Activated T-helper 1 cell treated with anti-CD3 and anti-CD28 coated beads, Interleukin-12 subunit alpha, Interleukin-12 subunit beta, Interleukin-2, Interleukin-4 antibody, amounts not matched to agents 30 ng/mL and 10 ng/mL and 1 ng/mL, durations not matched to agents 14 hours and 24 hours and 36 hours (primary cell): ENCODE measurements at regions of chrX and their contacts with region 1.

Region 1: DNA sequence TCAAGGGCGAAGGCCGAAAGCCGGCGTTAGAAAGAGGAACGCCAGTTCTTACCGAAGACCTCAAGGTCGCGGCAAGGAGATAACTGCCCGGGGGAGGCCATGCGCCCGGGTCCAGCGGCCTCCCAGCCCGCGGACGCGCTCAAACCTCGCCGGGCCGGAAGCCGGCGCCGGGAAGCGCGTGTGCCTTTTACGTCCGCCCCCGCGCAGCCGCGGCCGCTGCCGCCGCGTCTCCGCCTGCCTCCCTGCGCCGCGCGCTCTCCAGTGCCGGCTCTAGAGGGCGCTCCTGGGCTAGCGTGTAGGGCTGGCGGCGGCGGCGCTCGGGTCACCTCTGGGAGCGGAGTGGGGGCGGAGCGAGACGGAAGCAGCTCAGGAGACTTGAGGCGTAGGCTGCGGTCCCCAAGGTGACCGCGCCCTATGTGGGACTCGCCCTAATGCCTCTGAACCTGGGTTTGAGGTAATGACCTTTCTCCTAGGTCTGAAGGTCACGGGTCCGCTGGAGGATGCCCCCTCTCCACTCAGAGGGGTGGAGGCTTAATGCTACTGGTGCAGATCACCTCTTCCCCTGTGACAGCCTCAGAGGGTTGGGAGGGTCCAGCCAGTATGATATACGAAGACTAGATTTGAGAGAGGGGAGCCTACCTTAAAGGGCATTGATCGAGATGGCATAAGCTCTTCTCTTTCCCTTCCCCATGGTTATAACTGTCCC is 839 bp downstream of the SLC25A5 start:
- DNase-seq: peak; percentile 83
- H3K4me3 Mint-ChIP-seq: peak overlapping the region; percentile 90
- H3K27ac Mint-ChIP-seq: peak overlapping the region; percentile 93
- H3K4me1 Mint-ChIP-seq: peaks cover 12% of the 10 kb centered on the region
- H3K27me3 Mint-ChIP-seq: no peaks in the 10 kb centered on the region

Region 2: DNA sequence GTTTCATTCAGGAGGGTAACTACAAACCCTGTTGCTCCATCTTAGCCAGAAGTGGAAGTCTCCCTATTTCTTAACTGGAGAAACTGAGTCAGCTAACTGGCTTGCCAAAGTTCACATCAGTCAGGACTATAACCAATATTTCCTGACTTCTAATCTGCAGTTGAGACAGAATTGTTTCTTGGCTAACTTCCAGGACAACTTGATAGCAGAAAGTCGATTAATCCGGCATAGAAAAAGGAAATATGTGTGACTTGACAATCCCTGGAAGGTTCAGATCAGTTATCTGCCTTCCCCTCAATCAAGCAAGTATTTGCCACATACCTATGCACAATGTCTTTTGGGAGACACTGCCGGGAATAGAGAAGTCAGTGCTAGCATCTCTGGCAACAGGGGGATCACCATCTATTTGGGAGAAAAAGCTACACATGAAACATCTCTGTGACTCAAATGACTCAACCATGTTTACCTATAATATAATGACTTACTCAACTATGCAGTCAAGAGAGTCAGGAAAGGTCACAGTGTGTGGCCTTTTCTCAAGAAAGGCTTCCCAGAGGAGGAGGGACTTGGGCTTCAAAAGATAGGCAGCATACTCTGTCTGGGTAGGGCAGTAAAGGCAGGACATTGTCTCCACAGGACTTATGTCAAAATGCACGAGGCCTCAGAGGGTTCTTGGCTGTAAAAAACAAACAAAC is 507.1 kb before region 1 on chrX:
- intact Hi-C with region 1: no loop called
- DNase-seq: no peak
- H3K4me3 Mint-ChIP-seq: no peak overlapping the region
- H3K27ac Mint-ChIP-seq: no peak overlapping the region
- H3K4me1 Mint-ChIP-seq: no peaks in the 10 kb centered on the region
- H3K27me3 Mint-ChIP-seq: peaks cover 4% of the 10 kb centered on the region

Region 3: GRCh38 chrX:119398974-119399771 is 69.9 kb before region 1 on chrX and contains the start of gene SLC25A43:
- intact Hi-C with region 1: loop called (anchors 1 kb)
- DNase-seq: peak; percentile 14
- H3K4me3 Mint-ChIP-seq: peak within 1 kb of the TSS; percentile 89
- H3K27ac Mint-ChIP-seq: peak within 1 kb of the TSS; percentile 88
- H3K4me1 Mint-ChIP-seq: peaks cover 28% of the 10 kb centered on the region
- H3K27me3 Mint-ChIP-seq: peaks cover 2% of the 10 kb centered on the region
- total RNA-seq, gene SLC25A43: 9.8 and 12.6 TPM in 2 replicates

Region 4: DNA sequence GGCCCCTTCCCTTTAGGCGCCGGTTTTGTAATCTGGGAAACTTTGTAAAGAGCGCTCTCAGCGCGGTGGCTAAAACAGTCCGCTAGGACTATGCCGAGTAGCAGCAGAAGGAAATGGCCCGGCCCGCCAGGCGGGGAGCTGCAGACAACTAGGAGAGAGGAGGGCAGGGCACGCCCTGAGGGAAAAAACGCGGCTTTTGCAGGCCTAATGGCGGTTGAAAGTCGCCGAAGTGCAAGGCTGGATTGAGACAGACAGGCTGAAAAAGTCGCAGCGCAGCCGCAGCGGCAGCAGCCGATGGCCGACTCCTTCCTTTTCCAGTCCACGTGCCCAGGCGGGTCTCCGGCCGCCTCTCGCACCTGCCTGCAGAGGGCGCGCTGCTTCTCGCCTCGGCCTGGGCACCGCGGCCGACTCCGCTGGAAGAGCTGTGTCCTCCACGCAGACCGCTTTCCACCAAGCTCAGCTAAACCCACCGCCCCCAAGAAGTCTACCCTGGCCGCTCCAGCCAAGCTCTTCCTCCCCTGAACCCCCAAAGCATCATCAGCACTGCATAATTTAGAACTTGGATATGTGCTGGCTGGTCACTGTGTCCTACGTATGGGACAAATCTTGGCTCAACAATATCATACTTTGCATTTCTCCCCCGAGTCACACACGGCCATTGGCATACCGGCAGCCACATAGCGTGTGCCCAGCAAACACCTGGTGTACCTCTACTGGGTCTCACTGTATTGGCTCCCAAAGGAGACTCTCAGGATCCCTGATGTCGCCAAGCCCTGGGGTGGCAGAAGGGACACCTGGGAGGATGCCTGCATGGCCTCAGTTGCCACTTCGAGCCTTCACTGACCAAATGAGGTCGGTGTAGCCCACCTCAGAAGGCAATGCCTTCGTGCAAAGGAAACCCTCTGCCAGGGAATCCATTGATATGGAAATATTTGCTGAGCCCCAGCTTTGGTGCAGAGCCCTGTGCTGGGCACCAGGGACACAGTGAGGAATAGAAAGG is 13.7 kb after region 1 on chrX:
- intact Hi-C with region 1: loop called (anchors 2 kb)
- DNase-seq: peak; percentile 59
- H3K4me3 Mint-ChIP-seq: peak overlapping the region; percentile 59
- H3K27ac Mint-ChIP-seq: peak overlapping the region; percentile 48
- H3K4me1 Mint-ChIP-seq: peaks cover 10% of the 10 kb centered on the region
- H3K27me3 Mint-ChIP-seq: peaks cover 4% of the 10 kb centered on the region

Region 5: GRCh38 chrX:119529345-119530276 is 60.5 kb after region 1 on chrX:
- intact Hi-C with region 1: no loop called
- DNase-seq: no peak
- H3K4me3 Mint-ChIP-seq: no peak overlapping the region
- H3K27ac Mint-ChIP-seq: no peak overlapping the region
- H3K4me1 Mint-ChIP-seq: peaks cover 7% of the 10 kb centered on the region
- H3K27me3 Mint-ChIP-seq: no peaks in the 10 kb centered on the region

Region 6: DNA sequence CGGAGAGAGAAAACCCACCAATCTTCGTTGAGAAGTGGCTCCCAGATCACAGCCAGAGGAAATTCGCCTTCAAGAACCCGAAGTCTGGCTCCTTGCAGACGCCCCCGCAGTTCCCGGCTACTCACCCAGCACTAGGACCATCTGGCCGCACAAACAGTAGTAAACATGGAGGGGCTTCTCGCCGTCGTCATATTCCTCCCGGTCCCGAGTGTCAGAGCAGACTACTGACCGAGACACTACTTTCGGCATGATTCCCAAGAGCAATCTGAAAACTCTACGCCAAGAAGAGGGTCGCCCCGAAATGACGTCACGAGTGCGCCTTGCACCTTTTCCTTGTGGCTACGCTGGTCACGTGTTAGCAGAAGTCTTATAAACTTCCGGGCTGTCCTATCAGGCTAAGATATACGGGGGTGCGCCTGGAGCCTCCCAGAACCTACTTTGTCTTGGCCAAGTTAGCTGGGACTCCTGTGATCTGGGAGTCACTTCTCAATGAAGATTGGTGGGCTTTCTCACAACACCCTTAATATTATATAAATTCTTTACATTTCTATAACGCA is 96.1 kb after region 1 on chrX and contains the start of gene STEEP1:
- intact Hi-C with region 1: loop called (anchors 2 kb)
- DNase-seq: peak; percentile 80
- H3K4me3 Mint-ChIP-seq: peak within 1 kb of the TSS; percentile 93
- H3K27ac Mint-ChIP-seq: peak within 1 kb of the TSS; percentile 92
- H3K4me1 Mint-ChIP-seq: peaks cover 15% of the 10 kb centered on the region
- H3K27me3 Mint-ChIP-seq: peaks cover 2% of the 10 kb centered on the region
- total RNA-seq, gene STEEP1: 25.0 and 25.9 TPM in 2 replicates

Region 7: DNA sequence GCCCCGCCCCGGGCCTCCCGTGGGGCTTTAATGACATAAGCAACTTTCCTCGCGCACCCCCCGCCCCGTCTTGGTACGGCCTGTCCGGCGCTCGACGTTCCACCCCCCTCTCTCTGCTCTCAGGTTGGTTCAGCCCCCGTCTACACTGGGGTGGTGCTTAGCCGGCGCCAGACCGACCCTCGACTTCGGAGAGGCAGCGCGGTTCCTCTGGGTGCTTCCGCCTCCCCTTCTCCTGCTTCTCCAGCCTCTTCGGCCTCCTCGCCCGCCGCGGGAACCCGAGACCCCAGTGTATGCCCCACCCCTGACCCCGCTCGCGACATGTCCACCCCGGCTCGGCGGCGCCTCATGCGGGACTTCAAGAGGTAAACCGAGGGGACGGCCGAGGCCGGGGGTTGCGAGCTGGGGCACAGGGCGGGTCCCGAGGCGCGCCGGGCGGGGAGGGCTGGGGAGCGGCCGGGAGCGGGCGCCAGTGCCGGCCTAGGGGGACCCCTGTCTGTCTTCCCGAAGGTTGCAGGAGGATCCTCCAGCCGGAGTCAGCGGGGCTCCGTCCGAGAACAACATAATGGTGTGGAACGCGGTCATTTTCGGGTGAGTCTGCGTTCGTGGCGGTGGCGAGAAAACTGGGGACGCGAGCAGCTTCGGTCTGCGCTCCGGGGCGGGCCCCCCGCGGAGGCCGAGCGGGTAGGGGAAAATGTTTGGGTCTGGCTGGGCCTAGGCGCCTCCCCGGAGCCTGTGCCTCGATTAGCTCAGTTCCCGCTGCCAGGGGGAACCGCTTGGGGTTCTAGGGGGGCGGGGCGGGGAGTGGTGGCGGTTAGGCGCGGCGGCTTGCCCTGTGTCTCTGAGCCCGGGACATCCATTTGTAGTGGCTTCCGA is 105.5 kb after region 1 on chrX and contains the start of gene UBE2A:
- intact Hi-C with region 1: loop called (anchors 1 kb)
- DNase-seq: peak; percentile 81
- H3K4me3 Mint-ChIP-seq: peak within 1 kb of the TSS; percentile 86
- H3K27ac Mint-ChIP-seq: peak within 1 kb of the TSS; percentile 77
- H3K4me1 Mint-ChIP-seq: peaks cover 19% of the 10 kb centered on the region
- H3K27me3 Mint-ChIP-seq: no peaks in the 10 kb centered on the region
- total RNA-seq, gene UBE2A: 60.1 and 61.3 TPM in 2 replicates

Region 8: GRCh38 chrX:119791438-119792231 is 322.6 kb after region 1 on chrX and contains the start of gene RPL39:
- intact Hi-C with region 1: loop called (anchors 1 kb)
- DNase-seq: peak; percentile 75
- H3K4me3 Mint-ChIP-seq: peak within 1 kb of the TSS; percentile 96
- H3K27ac Mint-ChIP-seq: peak within 1 kb of the TSS; percentile 95
- H3K4me1 Mint-ChIP-seq: peaks cover 10% of the 10 kb centered on the region
- H3K27me3 Mint-ChIP-seq: no peaks in the 10 kb centered on the region
- total RNA-seq, gene RPL39: 1,853 and 1,912 TPM in 2 replicates

Region 9: DNA sequence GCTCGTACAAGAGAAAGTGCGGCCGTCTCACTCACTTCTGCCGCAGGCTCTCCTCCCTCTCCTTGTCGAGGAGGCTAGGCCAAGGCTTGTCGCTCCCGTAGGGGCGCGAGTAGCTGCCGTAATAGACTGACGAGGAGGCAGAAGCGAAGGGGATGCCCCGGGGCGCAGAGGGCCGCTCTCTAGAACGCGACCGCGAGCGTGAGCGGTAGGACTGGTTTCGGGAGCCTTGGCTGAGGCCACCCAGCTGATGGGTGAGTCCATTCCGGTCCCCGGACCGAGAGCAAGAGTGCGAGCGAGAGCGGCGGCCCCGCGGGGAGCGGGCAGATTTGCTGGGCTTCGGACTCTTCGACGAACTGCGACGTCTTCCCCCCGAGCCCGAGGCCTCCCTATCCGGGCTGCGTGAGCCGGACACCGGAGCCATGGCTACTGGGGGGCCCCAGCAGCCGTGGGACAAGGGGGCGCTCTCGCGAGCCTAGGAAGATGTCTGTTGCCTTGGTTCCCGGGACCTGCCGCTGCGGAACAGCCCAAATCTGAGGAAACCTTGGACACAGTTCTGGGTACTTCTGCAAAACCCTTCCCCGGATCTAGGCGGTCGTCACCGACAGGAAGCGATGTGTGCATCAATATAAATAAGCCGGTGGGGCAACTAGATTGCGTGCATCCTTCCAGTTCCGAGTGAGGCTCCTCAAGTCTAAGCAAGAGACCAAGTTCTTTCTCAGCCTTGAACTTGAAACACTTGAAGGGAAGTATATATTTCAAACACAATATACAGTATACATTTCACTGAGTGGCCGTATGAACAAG is 474.3 kb after region 1 on chrX and contains the start of gene NKAP:
- intact Hi-C with region 1: loop called (anchors 1 kb)
- DNase-seq: peak; percentile 78
- H3K4me3 Mint-ChIP-seq: peak within 1 kb of the TSS; percentile 93
- H3K27ac Mint-ChIP-seq: peak within 1 kb of the TSS; percentile 97
- H3K4me1 Mint-ChIP-seq: peaks cover 16% of the 10 kb centered on the region
- H3K27me3 Mint-ChIP-seq: peaks cover 2% of the 10 kb centered on the region
- total RNA-seq, gene NKAP: 9.4 and 10.1 TPM in 2 replicates